GM12878 (cell line): ENCODE measurements at regions of chr1 and their contacts with region 1.

Region 1: GRCh38 chr1:74733604-74734484 is 892 bp downstream of the TYW3 start:
- DNase-seq: no peak
- ATAC-seq: peak; percentile 66
- H3K4me3 ChIP-seq: peak overlapping the region; percentile 81
- H3K27ac ChIP-seq: peak overlapping the region; percentile 90
- H3K4me1 ChIP-seq: peaks cover 10% of the 10 kb centered on the region; the same call in 1 of the 2 replicates
- H3K27me3 ChIP-seq: no peaks in the 10 kb centered on the region
- CTCF ChIP-seq: peak; percentile 74 to 89 (median 86)
- EP300 ChIP-seq: no peak
- POLR2A ChIP-seq: no peak
- RAD21 ChIP-seq: peak; percentile 84

Region 2: GRCh38 chr1:74197657-74198552 is 535.9 kb before region 1 on chr1 and contains the starts of genes FPGT and LRRIQ3:
- CTCF ChIA-PET with region 1: interaction called, 5 read pairs
- POLR2A ChIA-PET with region 1: no interaction called
- RAD21 ChIA-PET with region 1: no interaction called
- SMC1A ChIA-PET with region 1: no interaction called
- in situ Hi-C with region 1: loop called (anchors 5 kb)
- intact Hi-C with region 1: loop called (anchors 10 kb)
- DNase-seq: peak; percentile 84
- ATAC-seq: peak; percentile 96
- H3K4me3 ChIP-seq: peak within 1 kb of the TSS; percentile 82
- H3K27ac ChIP-seq: peak within 1 kb of the TSS; percentile 72
- H3K4me1 ChIP-seq: 0 out of 2 replicates have a peak, but pooled peaks cover 5% of the 10 kb centered on the region
- H3K27me3 ChIP-seq: no peaks in the 10 kb centered on the region
- CTCF ChIP-seq: no peak
- EP300 ChIP-seq: no peak
- POLR2A ChIP-seq: peak; percentile 89
- RAD21 ChIP-seq: no peak
- polyA plus RNA-seq, gene FPGT: 7.8 to 11.9 TPM
- polyA plus RNA-seq, gene LRRIQ3: 3.4 to 4.7 TPM

Region 3: GRCh38 chr1:74517599-74518051 is 216.2 kb before region 1 on chr1:
- CTCF ChIA-PET with region 1: interaction called, 3 read pairs
- POLR2A ChIA-PET with region 1: no interaction called
- RAD21 ChIA-PET with region 1: no interaction called
- SMC1A ChIA-PET with region 1: no interaction called
- in situ Hi-C with region 1: no loop called
- intact Hi-C with region 1: loop called (anchors 5 kb)
- DNase-seq: peak; percentile 25
- ATAC-seq: peak; percentile 87
- H3K4me3 ChIP-seq: no peak overlapping the region
- H3K27ac ChIP-seq: no peak overlapping the region
- H3K4me1 ChIP-seq: no peaks in the 10 kb centered on the region
- H3K27me3 ChIP-seq: peaks cover 0 to 8% of the 10 kb centered on the region in 2 experiments; a peak in 2 of 4 replicates
- CTCF ChIP-seq: no peak
- EP300 ChIP-seq: no peak
- POLR2A ChIP-seq: no peak
- RAD21 ChIP-seq: peak; percentile 23; the same call in 1 of the 2 replicates

Region 4: DNA sequence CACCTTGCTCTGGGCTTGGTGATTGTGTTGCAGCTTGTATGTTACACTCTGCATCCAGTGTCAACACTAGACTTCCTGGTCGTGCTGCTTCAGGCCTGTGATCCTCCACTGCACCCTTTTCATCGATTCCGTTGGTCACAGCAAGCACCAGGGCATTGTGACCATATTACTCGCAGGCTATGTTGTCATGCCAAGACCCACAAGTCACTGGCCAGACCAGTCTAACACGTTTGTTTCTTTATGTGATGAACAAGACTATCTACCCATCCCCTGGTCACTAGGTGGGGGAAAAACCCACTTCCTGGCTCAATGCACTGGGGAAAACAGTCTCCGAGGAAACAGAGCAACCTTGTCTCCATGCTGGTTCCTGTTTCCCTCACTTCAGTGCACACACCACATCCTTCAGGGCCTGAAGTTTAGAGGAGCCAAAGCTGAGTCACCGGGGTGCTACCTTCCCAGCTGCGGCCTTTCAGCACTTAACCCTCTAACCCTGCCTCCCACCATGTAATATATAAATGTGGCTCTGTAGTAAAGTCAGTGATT is 81.2 kb before region 1 on chr1:
- CTCF ChIA-PET with region 1: interaction called, 13 read pairs
- POLR2A ChIA-PET with region 1: interaction called, 3 read pairs
- RAD21 ChIA-PET with region 1: no interaction called
- SMC1A ChIA-PET with region 1: interaction called, 5 read pairs
- in situ Hi-C with region 1: no loop called
- intact Hi-C with region 1: loop called (anchors 2 kb)
- DNase-seq: peak; percentile 83
- ATAC-seq: peak; percentile 97
- H3K4me3 ChIP-seq: no peak overlapping the region
- H3K27ac ChIP-seq: peak overlapping the region; percentile 7; the same call in 1 of the 2 replicates
- H3K4me1 ChIP-seq: peaks cover 14% of the 10 kb centered on the region
- H3K27me3 ChIP-seq: no peaks in the 10 kb centered on the region
- CTCF ChIP-seq: no peak
- EP300 ChIP-seq: peak in 1 of 2 experiments; percentile 50; a peak in 1 of 4 replicates
- POLR2A ChIP-seq: no peak
- RAD21 ChIP-seq: no peak

Region 5: GRCh38 chr1:74714429-74715235 is 19.2 kb before region 1 on chr1:
- CTCF ChIA-PET with region 1: interaction called, 56 read pairs
- POLR2A ChIA-PET with region 1: interaction called, 35 read pairs
- RAD21 ChIA-PET with region 1: interaction called, 67 read pairs
- SMC1A ChIA-PET with region 1: interaction called, 77 read pairs
- in situ Hi-C with region 1: no loop called
- intact Hi-C with region 1: no loop called
- DNase-seq: no peak
- ATAC-seq: peak; percentile 83
- H3K4me3 ChIP-seq: peak overlapping the region; percentile 30; the same call in 1 of the 2 replicates
- H3K27ac ChIP-seq: peak overlapping the region; percentile 57
- H3K4me1 ChIP-seq: peaks cover 26% of the 10 kb centered on the region
- H3K27me3 ChIP-seq: no peaks in the 10 kb centered on the region
- CTCF ChIP-seq: no peak
- EP300 ChIP-seq: no peak; a peak in 1 of 4 replicates
- POLR2A ChIP-seq: no peak
- RAD21 ChIP-seq: no peak

Region 6: GRCh38 chr1:74771913-74772515 is 38.2 kb after region 1 on chr1:
- CTCF ChIA-PET with region 1: interaction called, 16 read pairs
- POLR2A ChIA-PET with region 1: interaction called, 3 read pairs
- RAD21 ChIA-PET with region 1: interaction called, 24 read pairs
- SMC1A ChIA-PET with region 1: interaction called, 17 read pairs
- in situ Hi-C with region 1: no loop called
- intact Hi-C with region 1: no loop called
- DNase-seq: peak; percentile 8
- ATAC-seq: peak; percentile 80
- H3K4me3 ChIP-seq: no peak overlapping the region
- H3K27ac ChIP-seq: no peak overlapping the region
- H3K4me1 ChIP-seq: no peaks in the 10 kb centered on the region
- H3K27me3 ChIP-seq: no peaks in the 10 kb centered on the region; a peak in 1 of 4 replicates
- CTCF ChIP-seq: peak; percentile 60 to 74 (median 63)
- EP300 ChIP-seq: no peak
- POLR2A ChIP-seq: no peak
- RAD21 ChIP-seq: peak; percentile 92

Region 7: GRCh38 chr1:74799119-74799518 is 65.3 kb after region 1 on chr1:
- CTCF ChIA-PET with region 1: no interaction called
- POLR2A ChIA-PET with region 1: no interaction called
- RAD21 ChIA-PET with region 1: no interaction called
- SMC1A ChIA-PET with region 1: no interaction called
- in situ Hi-C with region 1: no loop called
- intact Hi-C with region 1: no loop called
- DNase-seq: no peak
- ATAC-seq: no peak
- H3K4me3 ChIP-seq: no peak overlapping the region
- H3K27ac ChIP-seq: no peak overlapping the region
- H3K4me1 ChIP-seq: no peaks in the 10 kb centered on the region
- H3K27me3 ChIP-seq: no peaks in the 10 kb centered on the region
- CTCF ChIP-seq: no peak
- EP300 ChIP-seq: no peak
- POLR2A ChIP-seq: no peak
- RAD21 ChIP-seq: no peak

Region 8: GRCh38 chr1:76547916-76548315 is 1814.1 kb after region 1 on chr1:
- CTCF ChIA-PET with region 1: no interaction called
- POLR2A ChIA-PET with region 1: no interaction called
- RAD21 ChIA-PET with region 1: no interaction called
- SMC1A ChIA-PET with region 1: no interaction called
- in situ Hi-C with region 1: no loop called
- intact Hi-C with region 1: no loop called
- DNase-seq: no peak
- ATAC-seq: no peak
- H3K4me3 ChIP-seq: no peak overlapping the region
- H3K27ac ChIP-seq: no peak overlapping the region
- H3K4me1 ChIP-seq: no peaks in the 10 kb centered on the region
- H3K27me3 ChIP-seq: no peaks in the 10 kb centered on the region
- CTCF ChIP-seq: no peak; a peak in 1 of 6 replicates
- EP300 ChIP-seq: no peak
- POLR2A ChIP-seq: no peak
- RAD21 ChIP-seq: no peak